ENCODE measurements at regions of chr21 and their contacts with region 1.

Region 1: GRCh38 chr21:26715878-26716506 is 129.2 kb downstream of the ADAMTS1 start:
- DNase-seq: peak; percentile 73
- H3K4me3 ChIP-seq: no peak overlapping the region
- H3K27ac ChIP-seq: no peak overlapping the region
- H3K4me1 ChIP-seq: peaks cover 13% of the 10 kb centered on the region
- H3K27me3 ChIP-seq: no peaks in the 10 kb centered on the region
- CTCF ChIP-seq: peak; percentile 88

Region 2: DNA sequence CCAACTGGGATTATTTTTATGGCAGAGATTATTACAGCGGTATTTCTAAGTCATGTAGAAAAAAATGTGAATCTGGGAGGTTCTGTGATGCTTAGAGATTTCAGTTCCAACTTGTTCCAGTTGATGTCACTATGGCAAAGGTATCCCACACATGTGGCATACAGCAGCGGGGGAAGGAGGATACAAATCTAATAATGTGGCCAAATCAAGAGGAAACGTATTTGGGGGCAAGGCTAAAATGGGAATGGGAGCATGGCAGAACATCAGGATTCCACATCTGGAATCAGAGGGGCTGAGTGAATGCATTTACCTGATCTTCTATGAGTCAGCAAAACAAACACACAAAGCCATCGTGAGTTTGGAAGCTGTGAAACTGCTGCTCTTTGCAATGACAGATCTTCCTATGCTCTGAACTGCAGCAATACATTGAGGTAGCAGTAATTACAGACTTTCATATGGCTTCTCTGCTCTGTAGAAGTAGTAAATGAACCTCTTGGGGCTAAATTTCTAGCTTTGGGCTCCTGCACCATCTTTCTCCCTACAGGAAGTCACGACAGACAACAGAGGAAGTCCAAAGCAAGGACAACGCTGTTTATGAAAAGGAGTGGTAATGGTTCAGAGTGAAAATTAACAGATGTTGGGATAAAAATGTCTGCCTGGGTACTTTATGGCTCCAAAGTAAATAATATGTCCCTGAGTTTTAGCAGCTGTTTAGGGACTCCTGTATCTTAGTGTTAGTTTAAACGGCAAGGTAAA is 925.7 kb before region 1 on chr21:
- CTCF ChIA-PET with region 1: no interaction called
- POLR2A ChIA-PET with region 1: no interaction called
- intact Hi-C with region 1: loop called (anchors 10 kb)
- DNase-seq: peak; percentile 79
- H3K4me3 ChIP-seq: peak overlapping the region; percentile 15
- H3K27ac ChIP-seq: peak overlapping the region; percentile 46
- H3K4me1 ChIP-seq: peaks cover 8% of the 10 kb centered on the region
- H3K27me3 ChIP-seq: no peaks in the 10 kb centered on the region
- CTCF ChIP-seq: peak; percentile 66

Region 3: GRCh38 chr21:25881525-25882376 is 834.2 kb before region 1 on chr21:
- CTCF ChIA-PET with region 1: no interaction called
- POLR2A ChIA-PET with region 1: no interaction called
- intact Hi-C with region 1: loop called (anchors 5 kb)
- DNase-seq: peak; percentile 78
- H3K4me3 ChIP-seq: no peak overlapping the region
- H3K27ac ChIP-seq: peak overlapping the region; percentile 31
- H3K4me1 ChIP-seq: peaks cover 6% of the 10 kb centered on the region
- H3K27me3 ChIP-seq: no peaks in the 10 kb centered on the region
- CTCF ChIP-seq: peak; percentile 96

Region 4: GRCh38 chr21:26332867-26333266 is 383.1 kb before region 1 on chr21:
- CTCF ChIA-PET with region 1: no interaction called
- POLR2A ChIA-PET with region 1: no interaction called
- intact Hi-C with region 1: loop called (anchors 10 kb)
- DNase-seq: no peak
- H3K4me3 ChIP-seq: no peak overlapping the region
- H3K27ac ChIP-seq: no peak overlapping the region
- H3K4me1 ChIP-seq: no peaks in the 10 kb centered on the region
- H3K27me3 ChIP-seq: no peaks in the 10 kb centered on the region
- CTCF ChIP-seq: no peak